ENCODE measurements at regions of chr10 and their contacts with region 1.

Region 1: DNA sequence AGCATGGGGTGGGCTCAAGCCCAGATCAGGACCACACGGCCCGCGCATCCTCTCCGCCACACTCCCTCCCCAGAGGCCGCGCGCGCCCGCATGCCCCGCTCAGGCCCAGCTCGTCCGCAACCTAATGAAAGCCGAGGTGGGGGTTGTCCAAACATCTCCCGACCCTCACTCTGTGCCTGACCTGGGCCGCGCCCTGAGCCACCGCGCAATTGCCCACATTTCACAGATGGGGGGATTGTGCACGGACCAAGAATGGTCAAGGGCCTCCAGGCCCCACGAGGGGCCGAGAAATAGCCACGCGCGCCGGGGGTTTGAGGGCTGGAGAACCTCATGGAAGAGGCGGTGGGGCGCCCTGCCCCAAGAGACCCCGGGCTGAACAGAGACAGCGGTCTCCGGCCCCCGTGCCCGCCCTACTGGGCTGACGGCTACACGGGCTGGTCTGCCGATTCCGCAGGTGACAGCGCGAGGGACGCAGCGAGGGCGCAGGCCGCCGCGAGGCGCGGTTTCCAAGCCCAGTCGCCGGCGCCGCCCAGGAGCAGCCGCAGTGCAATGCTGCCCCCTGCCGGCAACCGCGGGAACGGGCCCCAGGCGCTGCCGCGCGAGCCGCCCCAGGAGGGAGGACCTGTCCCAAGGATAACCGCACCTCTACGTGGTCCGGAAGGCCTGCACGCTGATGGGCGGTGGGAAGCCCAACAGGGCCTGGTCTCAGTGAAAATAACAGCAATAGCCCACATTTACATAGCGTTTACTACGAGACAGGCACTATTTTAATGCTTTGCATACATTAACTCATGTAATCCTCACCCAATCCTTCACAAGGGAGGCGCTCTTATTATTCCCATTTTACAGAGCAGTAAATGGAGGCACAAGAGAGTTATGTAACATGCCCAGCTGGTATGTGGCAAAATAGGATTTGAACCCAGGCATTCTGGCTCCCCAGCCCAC is 10.5 kb upstream of the GRID1 start:
- DNase-seq: no peak
- H3K4me3 ChIP-seq: peak overlapping the region in 2 of 4 donors; percentile 30 to 57
- H3K27ac ChIP-seq: no peak overlapping the region
- H3K4me1 ChIP-seq: peaks cover 0 to 10% (median 4%) of the 10 kb centered on the region in 3 donors
- H3K27me3 ChIP-seq: peaks cover 0 to 81% (median 0%) of the 10 kb centered on the region in 4 donors
- CTCF ChIP-seq: peak; percentile 96 to 99 (median 98)
- POLR2A ChIP-seq: no peak

Region 2: DNA sequence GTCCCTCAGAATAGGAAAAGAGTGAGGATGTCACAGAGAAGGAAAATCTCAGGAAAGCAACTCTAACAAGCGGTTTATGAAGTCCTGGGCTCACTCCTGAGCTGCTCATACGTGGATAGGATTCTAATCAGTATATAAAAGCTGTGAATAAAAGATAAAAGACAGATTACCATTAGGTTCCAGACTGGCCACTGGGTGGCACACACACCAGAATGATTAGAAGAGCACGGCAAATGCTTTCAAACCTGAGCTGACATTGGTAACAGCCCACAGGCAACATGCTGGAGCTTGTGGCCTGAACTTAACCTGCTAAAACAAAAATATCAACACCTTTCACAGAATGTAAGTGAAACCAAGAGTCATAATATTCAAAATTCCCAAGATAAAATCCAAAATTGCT is 381.3 kb before region 1 on chr10:
- intact Hi-C with region 1: loop called (anchors 10 kb)
- DNase-seq: no peak
- H3K4me3 ChIP-seq: no peak overlapping the region
- H3K27ac ChIP-seq: no peak overlapping the region
- H3K4me1 ChIP-seq: no peaks in the 10 kb centered on the region
- H3K27me3 ChIP-seq: peaks cover 0 to 5% (median 0%) of the 10 kb centered on the region in 4 donors
- CTCF ChIP-seq: peak in 3 of 6 experiments; percentile 21 to 59 (median 22)
- POLR2A ChIP-seq: no peak

Measured in esophagus squamous epithelium (tissue), 5 donors.